ENCODE measurements at regions of chr17 and their contacts with region 1.

Region 1: GRCh38 chr17:51527194-51527982 is 267.0 kb downstream of the UTP18 start:
- DNase-seq: no peak
- H3K4me3 ChIP-seq: no peak overlapping the region
- H3K27ac ChIP-seq: no peak overlapping the region
- H3K27me3 ChIP-seq: peaks cover 0 to 6% (median 0%) of the 10 kb centered on the region in 45 donors
- CTCF ChIP-seq: no peak

Region 2: GRCh38 chr17:51371732-51372151 is 155.6 kb before region 1 on chr17:
- intact Hi-C with region 1: no loop called
- DNase-seq: peak in 9 of 10 donors; percentile 66 to 85 (median 80)
- H3K4me3 ChIP-seq: peak overlapping the region in 51 of 59 donors; percentile 3 to 68 (median 44)
- H3K27ac ChIP-seq: peak overlapping the region; percentile 43 to 99 (median 96)
- H3K27me3 ChIP-seq: no peaks in the 10 kb centered on the region
- CTCF ChIP-seq: peak; percentile 60 to 93 (median 82)

Region 3: DNA sequence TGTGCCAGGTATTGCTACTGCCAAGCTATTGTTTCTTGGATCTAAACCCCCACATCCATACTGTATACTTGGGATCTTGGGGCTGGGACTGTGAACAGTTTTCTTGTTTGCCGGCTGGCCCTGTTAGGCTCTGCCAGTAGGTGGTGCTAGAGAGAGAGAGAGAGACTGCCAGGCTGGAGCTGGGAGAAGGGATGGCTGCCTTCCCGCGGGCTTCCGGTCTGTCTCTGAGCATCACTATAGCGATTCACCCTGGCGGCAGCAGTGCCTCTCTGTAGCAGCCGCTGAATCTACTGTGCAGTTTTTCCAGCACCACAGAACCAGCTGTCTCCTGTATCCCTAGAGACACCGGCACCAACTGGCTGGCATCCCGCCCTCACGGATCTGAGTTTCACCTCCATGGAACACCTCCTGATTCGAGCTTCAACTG is 65.8 kb before region 1 on chr17:
- intact Hi-C with region 1: loop called in 1 of 2 experiments (anchors 10 kb)
- DNase-seq: peak; percentile 27 to 88 (median 50)
- H3K4me3 ChIP-seq: no peak overlapping the region
- H3K27ac ChIP-seq: peak overlapping the region in 2 of 59 donors; percentile 19 to 31
- H3K27me3 ChIP-seq: no peaks in the 10 kb centered on the region
- CTCF ChIP-seq: peak in 55 of 56 donors; percentile 26 to 72 (median 59)

Region 4: GRCh38 chr17:51475730-51476129 is 51.7 kb before region 1 on chr17:
- intact Hi-C with region 1: no loop called
- DNase-seq: no peak
- H3K4me3 ChIP-seq: no peak overlapping the region
- H3K27ac ChIP-seq: no peak overlapping the region
- H3K27me3 ChIP-seq: peaks cover 0 to 8% (median 0%) of the 10 kb centered on the region in 45 donors
- CTCF ChIP-seq: no peak